ENCODE measurements at regions of chr7 and their contacts with region 1.

Region 1: DNA sequence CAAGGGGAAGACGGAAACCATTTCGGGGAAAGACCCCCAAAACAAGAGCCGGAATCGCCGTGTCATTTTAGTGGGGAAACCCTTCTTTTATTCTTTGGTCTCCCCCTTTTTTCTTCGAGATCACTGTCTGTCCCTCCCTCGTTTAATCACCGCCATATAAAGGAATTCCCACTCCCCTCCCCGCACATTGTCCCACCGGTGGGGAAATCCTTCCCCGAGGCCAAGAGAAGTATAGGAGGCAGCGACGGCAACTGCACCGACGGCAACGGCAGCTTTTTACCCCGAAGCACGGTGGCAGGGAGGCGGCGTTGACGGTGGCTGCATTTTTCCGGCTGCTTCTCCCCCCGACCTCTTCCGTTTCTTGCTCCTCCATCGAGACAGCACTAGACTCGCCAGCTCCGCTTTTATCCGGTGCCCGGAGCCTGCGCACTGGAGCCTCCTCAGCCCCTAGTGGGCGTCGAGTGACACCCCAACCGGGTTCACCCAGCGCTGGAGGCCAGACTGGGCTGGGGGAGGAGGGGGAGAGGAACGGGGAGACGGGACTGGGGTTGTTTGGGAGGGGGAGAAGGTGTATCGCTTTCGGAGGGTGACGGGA is 687 bp upstream of the KMT2E start:
- DNase-seq: peak; percentile 91
- ATAC-seq: peak; percentile 57
- H3K4me3 Mint-ChIP-seq: peak overlapping the region; percentile 96
- H3K27ac Mint-ChIP-seq: peak overlapping the region; percentile 100
- H3K4me1 Mint-ChIP-seq: peaks cover 53% of the 10 kb centered on the region
- H3K27me3 Mint-ChIP-seq: no peaks in the 10 kb centered on the region
- CTCF ChIP-seq: no peak

Region 2: DNA sequence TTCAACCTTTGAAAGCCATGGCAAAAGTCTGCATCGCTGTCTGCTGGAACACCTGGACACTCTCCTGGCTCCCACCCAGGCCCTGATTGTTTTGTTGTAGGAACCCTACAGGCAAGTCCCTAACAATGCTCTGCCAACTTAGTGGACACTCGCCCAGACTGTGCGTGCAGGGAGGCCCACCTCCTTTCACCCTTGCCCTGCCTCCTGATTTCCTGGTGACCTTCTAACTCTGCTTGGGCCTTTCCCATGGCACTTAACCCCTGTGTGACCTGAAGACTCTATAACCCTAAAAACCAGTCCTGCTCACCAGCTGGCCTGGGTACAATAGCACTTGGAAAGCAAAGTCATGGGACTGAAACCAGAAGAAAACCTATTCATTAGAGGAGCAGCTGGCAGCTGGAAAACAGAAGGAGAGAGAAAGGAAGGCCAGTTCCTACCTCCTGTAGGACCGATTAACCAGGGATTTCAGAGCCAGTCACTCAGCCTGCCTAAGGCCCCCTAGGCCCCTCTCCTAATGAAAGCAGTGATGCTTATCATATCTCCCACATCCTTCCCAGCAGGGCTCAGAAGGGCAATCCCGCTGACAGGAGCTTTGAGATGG is 82.0 kb before region 1 on chr7:
- CTCF ChIA-PET with region 1: no interaction called
- POLR2A ChIA-PET with region 1: interaction called, 21 read pairs
- intact Hi-C with region 1: loop called (anchors 2 kb)
- DNase-seq: no peak
- ATAC-seq: no peak
- H3K4me3 Mint-ChIP-seq: no peak overlapping the region
- H3K27ac Mint-ChIP-seq: peak overlapping the region; percentile 88
- H3K4me1 Mint-ChIP-seq: peaks cover 65% of the 10 kb centered on the region
- H3K27me3 Mint-ChIP-seq: no peaks in the 10 kb centered on the region
- CTCF ChIP-seq: no peak

Region 3: DNA sequence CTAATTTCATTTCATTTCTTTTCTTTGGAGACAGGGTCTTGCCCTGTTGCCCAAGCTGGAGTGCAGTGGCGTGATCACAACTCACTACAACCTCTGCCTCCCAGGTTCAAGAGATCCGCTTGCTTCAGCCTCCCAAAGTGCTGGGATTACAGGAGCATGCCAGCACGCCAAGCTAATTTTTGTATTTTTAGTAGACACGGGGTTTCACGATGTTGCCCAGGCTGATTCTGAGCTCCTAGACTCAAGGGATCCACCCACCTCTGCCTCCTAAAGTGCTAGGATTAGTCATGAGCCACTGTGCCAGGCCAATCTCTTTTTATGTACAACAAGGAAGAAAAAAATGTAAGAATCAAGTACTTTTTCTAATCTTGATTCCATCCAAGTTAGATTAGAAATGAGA is 10.0 kb before region 1 on chr7:
- CTCF ChIA-PET with region 1: no interaction called
- POLR2A ChIA-PET with region 1: interaction called, 24 read pairs
- intact Hi-C with region 1: loop called (anchors 1 kb)
- DNase-seq: no peak
- ATAC-seq: peak; percentile 47
- H3K4me3 Mint-ChIP-seq: peak overlapping the region; percentile 24
- H3K27ac Mint-ChIP-seq: peak overlapping the region; percentile 76
- H3K4me1 Mint-ChIP-seq: peaks cover 88% of the 10 kb centered on the region
- H3K27me3 Mint-ChIP-seq: no peaks in the 10 kb centered on the region
- CTCF ChIP-seq: no peak

Region 4: DNA sequence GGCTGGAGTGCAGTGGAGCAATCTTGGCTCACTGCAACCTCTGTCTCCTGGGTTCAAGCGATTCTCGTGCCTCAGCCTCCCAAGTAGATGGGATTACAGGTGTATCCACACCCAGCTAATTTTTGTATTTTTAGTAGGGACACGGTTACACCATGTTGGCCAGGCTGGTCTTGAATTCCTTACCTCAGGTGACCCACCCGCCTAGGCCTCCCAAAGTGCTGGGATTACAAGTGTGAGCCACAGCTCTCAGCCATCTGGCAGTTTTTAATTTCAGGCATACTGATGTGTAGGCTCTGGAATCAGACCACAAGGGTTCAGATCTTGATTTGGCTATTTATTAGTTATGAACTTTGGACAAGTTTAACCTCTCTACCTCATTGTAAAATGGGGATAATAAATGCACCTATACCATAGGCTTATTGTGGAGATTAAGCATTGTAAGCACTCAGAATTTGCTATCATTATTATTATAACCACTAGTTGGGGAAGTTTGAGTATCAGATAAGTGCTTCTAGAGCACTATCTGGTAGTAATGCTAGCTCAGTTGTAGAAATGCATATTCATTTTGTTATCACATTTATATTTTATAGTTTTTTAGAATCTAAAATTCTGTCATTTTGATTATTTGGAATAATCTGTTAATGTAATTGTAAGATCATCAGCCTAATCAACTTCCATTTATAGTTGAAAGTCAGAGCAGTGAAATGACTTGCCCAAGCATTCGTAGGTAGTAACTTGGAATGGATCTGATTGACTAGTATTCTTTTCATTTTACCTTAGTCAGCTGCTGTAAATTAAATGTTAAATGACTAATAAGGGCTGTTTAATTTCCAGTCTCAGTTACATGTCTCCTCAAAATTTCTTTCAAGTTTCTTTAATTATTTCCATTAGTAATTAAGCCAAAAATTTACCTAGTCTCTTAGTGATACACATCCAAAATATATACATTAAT is 23.2 kb after region 1 on chr7:
- CTCF ChIA-PET with region 1: no interaction called
- POLR2A ChIA-PET with region 1: interaction called, 105 read pairs
- intact Hi-C with region 1: loop called (anchors 2 kb)
- DNase-seq: no peak
- ATAC-seq: no peak
- H3K4me3 Mint-ChIP-seq: peak overlapping the region; percentile 7
- H3K27ac Mint-ChIP-seq: no peak overlapping the region
- H3K4me1 Mint-ChIP-seq: peaks cover 54% of the 10 kb centered on the region
- H3K27me3 Mint-ChIP-seq: no peaks in the 10 kb centered on the region
- CTCF ChIP-seq: no peak

Region 5: DNA sequence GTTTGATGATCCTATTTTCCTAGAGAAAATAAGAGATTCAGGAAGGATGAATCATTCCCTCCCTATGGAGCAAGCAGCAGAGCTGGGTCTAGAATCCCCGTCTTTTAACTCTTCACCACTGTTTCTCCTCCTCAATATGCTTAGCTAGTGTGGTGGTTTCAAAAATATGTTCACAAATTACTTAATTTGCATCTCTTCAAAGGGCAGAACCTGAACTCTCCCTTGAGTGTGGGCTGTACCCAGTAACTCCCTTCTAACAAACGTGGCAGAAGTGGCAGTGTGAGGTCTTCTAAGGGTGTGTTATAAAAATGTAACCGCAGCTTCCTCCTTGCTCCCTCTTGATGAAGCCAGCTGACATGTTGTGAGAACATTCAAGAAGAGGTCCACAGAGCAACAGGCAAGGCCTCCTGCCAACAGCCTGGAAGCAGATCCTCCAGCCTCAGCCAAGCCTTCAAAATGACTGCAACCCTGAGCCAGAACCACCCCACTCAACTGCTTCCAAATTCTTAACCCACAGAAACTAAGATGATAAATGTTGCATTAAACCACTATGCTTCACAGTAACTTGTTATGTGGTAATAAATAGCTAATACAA is 338.8 kb after region 1 on chr7:
- CTCF ChIA-PET with region 1: no interaction called
- POLR2A ChIA-PET with region 1: interaction called, 6 read pairs
- intact Hi-C with region 1: loop called (anchors 2 kb)
- DNase-seq: peak; percentile 40
- ATAC-seq: peak; percentile 88
- H3K4me3 Mint-ChIP-seq: peak overlapping the region; percentile 82
- H3K27ac Mint-ChIP-seq: peak overlapping the region; percentile 99
- H3K4me1 Mint-ChIP-seq: peaks cover 86% of the 10 kb centered on the region
- H3K27me3 Mint-ChIP-seq: no peaks in the 10 kb centered on the region
- CTCF ChIP-seq: no peak

Region 6: DNA sequence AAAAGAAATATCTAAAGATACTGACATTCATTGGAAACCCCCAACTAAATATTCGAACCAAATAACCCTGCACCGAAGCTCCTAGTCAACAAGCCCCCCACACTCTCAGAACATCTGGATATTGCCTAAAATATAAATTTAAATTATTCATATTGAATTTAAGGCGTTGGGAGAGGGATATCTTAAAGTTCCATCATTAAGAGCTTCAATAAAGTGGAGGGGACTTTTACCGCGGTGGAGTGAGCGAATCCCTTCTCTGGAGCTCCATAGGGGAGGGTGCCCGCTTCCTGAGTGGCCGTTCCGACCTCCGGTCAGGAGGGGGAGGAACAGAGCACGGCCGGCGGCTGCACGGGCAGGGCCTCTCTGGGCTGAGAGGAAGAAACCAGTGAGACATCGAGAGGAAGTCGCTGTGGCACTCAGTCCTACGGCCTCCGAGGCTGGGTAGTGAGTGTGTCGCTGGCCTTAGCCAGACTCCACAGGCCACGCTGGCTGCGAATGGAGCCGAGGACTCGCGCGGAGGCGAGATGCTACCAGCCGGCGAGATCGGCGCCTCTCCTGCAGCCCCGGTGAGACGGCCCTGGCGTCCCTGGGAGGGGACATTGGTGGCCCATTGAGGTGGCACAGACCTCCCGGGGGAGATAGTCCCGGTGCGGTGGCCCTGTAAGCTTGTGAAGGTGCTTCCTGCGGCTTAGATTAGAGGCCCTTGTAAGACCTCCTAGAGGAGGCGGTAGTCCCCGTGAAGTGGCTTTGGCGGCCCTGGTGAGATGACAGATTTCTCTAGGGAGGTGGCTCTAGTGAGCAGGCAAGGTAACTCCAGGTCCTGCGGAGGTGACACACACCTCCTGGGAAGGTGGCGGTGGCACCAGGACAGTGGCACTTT is 518.7 kb after region 1 on chr7 and contains the start of gene RINT1:
- CTCF ChIA-PET with region 1: no interaction called
- POLR2A ChIA-PET with region 1: interaction called, 11 read pairs
- intact Hi-C with region 1: loop called (anchors 2 kb)
- DNase-seq: peak; percentile 90
- ATAC-seq: peak; percentile 92
- H3K4me3 Mint-ChIP-seq: peak within 1 kb of the TSS; percentile 91
- H3K27ac Mint-ChIP-seq: peak within 1 kb of the TSS; percentile 96
- H3K4me1 Mint-ChIP-seq: peaks cover 33% of the 10 kb centered on the region
- H3K27me3 Mint-ChIP-seq: no peaks in the 10 kb centered on the region
- CTCF ChIP-seq: no peak
- total RNA-seq, gene RINT1: 31.1 and 35.5 TPM in 2 replicates